ENCODE measurements at regions of chr2 and their contacts with region 1.

Region 1: GRCh38 chr2:85089585-85089984 is 43.6 kb upstream of the TCF7L1 start:
- DNase-seq: no peak
- H3K4me3 Mint-ChIP-seq: no peak overlapping the region
- H3K27ac Mint-ChIP-seq: no peak overlapping the region
- H3K4me1 Mint-ChIP-seq: no peaks in the 10 kb centered on the region
- H3K27me3 Mint-ChIP-seq: no peaks in the 10 kb centered on the region
- CTCF ChIP-seq: no peak

Region 2: DNA sequence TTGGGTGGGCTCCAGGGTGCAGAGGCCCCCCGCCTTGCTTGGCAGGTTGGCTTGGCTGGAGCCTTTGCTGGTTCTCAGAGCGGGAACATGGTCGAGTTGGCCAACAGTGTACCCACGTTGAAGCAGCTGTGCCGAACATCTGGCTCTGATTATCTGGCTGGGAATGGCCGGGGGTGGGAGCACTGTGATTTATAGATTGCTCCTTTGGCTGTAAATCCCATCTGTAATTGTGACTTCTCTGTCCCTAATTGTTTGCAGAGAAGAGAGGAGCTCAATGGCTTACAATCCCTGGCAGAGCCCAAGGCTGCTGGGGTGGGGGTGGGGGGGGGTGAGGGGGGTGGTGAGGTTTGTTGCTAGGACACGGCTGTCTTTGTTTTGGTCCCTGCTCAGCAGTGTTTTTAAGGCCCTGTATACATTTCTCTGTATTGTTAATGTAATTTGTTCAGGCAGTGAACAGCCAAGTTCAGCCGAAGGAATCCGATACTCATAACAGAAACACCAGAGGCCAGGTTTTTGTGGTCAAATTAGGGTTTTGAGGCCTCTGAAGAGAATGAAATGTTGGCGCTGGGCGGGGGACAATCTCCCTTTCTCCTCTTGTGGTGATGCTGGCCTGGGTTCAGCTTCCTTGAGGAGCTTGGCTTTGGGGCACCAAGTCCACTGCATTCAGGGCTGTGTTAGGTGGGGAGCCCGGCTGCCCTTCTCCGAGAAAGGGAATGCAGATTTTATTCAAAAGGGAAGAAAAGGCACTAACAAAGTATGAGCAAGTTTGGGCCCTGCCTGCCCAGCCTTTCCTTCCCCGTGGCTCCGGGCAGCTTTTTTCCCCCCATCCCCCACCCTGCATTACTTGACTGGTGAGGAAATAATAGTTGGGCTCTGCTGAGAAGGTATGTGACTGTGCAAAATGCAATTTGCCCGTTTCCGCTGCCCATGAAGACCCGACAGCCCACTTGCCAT is 126.1 kb after region 1 on chr2:
- CTCF ChIA-PET with region 1: no interaction called
- POLR2A ChIA-PET with region 1: no interaction called
- intact Hi-C with region 1: loop called (anchors 10 kb)
- DNase-seq: no peak
- H3K4me3 Mint-ChIP-seq: no peak overlapping the region
- H3K27ac Mint-ChIP-seq: no peak overlapping the region
- H3K4me1 Mint-ChIP-seq: no peaks in the 10 kb centered on the region
- H3K27me3 Mint-ChIP-seq: no peaks in the 10 kb centered on the region
- CTCF ChIP-seq: no peak

Measured in MCF 10A (cell line).